ENCODE measurements at regions of chr5 and their contacts with region 1.

Region 1: DNA sequence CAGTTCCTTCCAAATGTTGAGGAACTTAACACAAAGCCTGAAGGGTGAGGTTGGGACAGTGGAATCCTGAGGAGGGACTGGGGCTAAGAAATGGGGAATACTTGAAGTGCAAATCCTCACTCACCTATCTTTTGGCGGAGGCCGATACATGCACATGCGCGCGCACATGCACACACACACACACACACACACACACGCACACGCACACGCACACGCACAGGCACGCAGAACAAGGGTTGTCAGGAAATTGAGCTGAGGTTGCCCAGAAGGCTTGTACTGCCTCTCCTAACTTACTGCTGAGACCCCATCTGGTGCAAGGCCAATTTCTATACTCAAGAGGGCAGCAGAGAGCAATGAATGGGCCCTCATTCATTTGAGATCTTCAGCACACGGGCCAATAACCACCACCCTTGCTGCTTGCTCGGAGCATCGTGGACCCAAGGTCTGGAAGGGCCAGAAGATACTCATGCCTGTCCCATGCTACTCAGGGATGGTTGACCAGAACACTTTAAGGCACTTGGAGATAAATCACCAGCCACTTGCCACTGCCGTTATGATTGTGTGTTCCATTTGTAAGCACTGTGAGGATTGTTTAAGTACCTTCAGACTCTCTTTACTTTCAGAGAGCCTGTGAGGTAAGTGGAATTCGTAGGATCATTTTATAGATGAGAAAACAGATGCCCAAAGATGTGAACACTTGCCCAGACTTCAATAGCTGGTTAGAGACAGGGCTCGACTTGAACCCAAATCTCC is 21.5 kb downstream of the BTF3 start:
- DNase-seq: peak; percentile 44
- ATAC-seq: peak; percentile 88 to 93

Region 2: GRCh38 chr5:73540192-73540591 is 20.5 kb after region 1 on chr5:
- intact Hi-C with region 1: loop called in 1 of 2 experiments (anchors 1 kb)
- DNase-seq: no peak
- ATAC-seq: no peak